ENCODE measurements at regions of chr7 and their contacts with region 1.

Region 1: GRCh38 chr7:148940702-148941597 is 56.9 kb upstream of the EZH2 start:
- DNase-seq: peak; percentile 66 to 81
- ATAC-seq: peak; percentile 89 to 90
- H3K4me3 ChIP-seq: peak overlapping the region; percentile 77 to 99 (median 87)
- H3K27ac ChIP-seq: peak overlapping the region; percentile 92 to 97 (median 94)
- H3K4me1 ChIP-seq: peaks cover 7 to 10% of the 10 kb centered on the region in 2 donors
- H3K27me3 ChIP-seq: no peaks in the 10 kb centered on the region
- CTCF ChIP-seq: no peak
- POLR2A ChIP-seq: peak; percentile 76 to 77

Region 2: GRCh38 chr7:148884299-148885022 is 56.5 kb before region 1 on chr7:
- in situ Hi-C with region 1: no loop called
- intact Hi-C with region 1: loop called (anchors 1 kb)
- DNase-seq: peak; percentile 88 to 92
- ATAC-seq: peak; percentile 91 to 93
- H3K4me3 ChIP-seq: peak overlapping the region; percentile 74 to 92 (median 85)
- H3K27ac ChIP-seq: peak overlapping the region; percentile 87 to 96 (median 92)
- H3K4me1 ChIP-seq: peaks cover 7 to 8% of the 10 kb centered on the region in 2 donors
- H3K27me3 ChIP-seq: peaks cover 0 to 3% (median 0%) of the 10 kb centered on the region in 3 donors
- CTCF ChIP-seq: no peak
- POLR2A ChIP-seq: peak; percentile 91 to 92

Region 3: DNA sequence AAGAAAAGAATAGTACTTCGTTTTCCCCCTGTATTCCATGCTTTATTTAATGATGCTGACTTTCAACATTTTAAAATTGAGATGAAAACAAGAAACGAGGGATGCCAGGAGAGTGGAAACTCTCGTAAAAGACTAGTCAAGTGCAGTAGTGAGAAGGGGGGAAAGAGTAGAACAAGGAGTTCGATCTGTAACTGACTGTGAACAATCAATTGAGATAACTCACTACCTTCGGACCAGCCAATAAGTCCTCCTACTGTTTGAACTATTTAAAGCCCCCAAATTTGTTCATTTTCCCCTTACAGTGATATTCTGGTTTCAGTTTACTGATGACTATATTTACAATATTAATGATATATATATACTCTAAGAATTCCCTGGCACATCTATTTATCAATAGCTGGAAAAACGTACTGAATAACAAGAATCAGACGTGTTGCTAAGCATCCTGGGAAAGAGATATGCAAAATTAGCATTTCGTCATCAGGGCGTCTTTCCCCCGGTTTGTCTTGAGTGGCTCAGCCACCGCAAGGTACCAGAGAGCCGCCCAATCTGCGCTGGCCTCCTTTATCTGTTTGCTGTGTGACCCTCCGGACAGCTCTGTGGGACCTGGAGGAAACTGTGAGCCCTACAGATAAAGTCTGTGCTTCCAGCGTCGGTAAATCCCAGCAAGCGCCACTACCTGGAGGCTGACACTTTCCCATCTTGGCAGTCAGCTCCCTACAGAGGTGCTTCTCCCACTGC is 46.2 kb after region 1 on chr7:
- in situ Hi-C with region 1: no loop called
- intact Hi-C with region 1: loop called (anchors 1 kb)
- DNase-seq: peak; percentile 73 to 76
- ATAC-seq: peak; percentile 92 to 94
- H3K4me3 ChIP-seq: peak overlapping the region; percentile 68 to 85 (median 70)
- H3K27ac ChIP-seq: peak overlapping the region; percentile 70 to 82 (median 76)
- H3K4me1 ChIP-seq: peaks cover 24 to 37% of the 10 kb centered on the region in 2 donors
- H3K27me3 ChIP-seq: no peaks in the 10 kb centered on the region
- CTCF ChIP-seq: no peak
- POLR2A ChIP-seq: no peak

Region 4: GRCh38 chr7:149125863-149126661 is 185.1 kb after region 1 on chr7 and contains the start of gene ZNF425:
- in situ Hi-C with region 1: no loop called
- intact Hi-C with region 1: loop called (anchors 2 kb)
- DNase-seq: peak; percentile 80 to 85
- ATAC-seq: peak; percentile 92 to 93
- H3K4me3 ChIP-seq: peak within 1 kb of the TSS; percentile 79 to 100 (median 96)
- H3K27ac ChIP-seq: peak within 1 kb of the TSS; percentile 94 to 98 (median 96)
- H3K4me1 ChIP-seq: peaks cover 9% of the 10 kb centered on the region in 2 donors
- H3K27me3 ChIP-seq: no peaks in the 10 kb centered on the region
- CTCF ChIP-seq: peak; percentile 96 to 99 (median 97)
- POLR2A ChIP-seq: peak; percentile 84 to 91
- total RNA-seq, gene ZNF425: 1.2 to 3.2 (median 1.5) TPM